Heart left ventricle (tissue), 16 donors: ENCODE measurements at regions of chr14 and their contacts with region 1.

Region 1: GRCh38 chr14:77028384-77029231 is at the start of gene IRF2BPL:
- DNase-seq: peak; percentile 99 to 100 (median 99)
- ATAC-seq: peak; percentile 65 to 83 (median 79)
- H3K4me3 ChIP-seq: peak within 1 kb of the TSS; percentile 64 to 96 (median 85)
- H3K27ac ChIP-seq: peak within 1 kb of the TSS; percentile 98 to 100 (median 100)
- H3K4me1 ChIP-seq: peaks cover 18 to 73% (median 56%) of the 10 kb centered on the region in 12 donors
- H3K27me3 ChIP-seq: no peaks in the 10 kb centered on the region
- CTCF ChIP-seq: no peak
- POLR2A ChIP-seq: peak; percentile 28 to 95
- total RNA-seq, gene IRF2BPL: 31.7 to 59.2 (median 36.7) TPM

Region 2: DNA sequence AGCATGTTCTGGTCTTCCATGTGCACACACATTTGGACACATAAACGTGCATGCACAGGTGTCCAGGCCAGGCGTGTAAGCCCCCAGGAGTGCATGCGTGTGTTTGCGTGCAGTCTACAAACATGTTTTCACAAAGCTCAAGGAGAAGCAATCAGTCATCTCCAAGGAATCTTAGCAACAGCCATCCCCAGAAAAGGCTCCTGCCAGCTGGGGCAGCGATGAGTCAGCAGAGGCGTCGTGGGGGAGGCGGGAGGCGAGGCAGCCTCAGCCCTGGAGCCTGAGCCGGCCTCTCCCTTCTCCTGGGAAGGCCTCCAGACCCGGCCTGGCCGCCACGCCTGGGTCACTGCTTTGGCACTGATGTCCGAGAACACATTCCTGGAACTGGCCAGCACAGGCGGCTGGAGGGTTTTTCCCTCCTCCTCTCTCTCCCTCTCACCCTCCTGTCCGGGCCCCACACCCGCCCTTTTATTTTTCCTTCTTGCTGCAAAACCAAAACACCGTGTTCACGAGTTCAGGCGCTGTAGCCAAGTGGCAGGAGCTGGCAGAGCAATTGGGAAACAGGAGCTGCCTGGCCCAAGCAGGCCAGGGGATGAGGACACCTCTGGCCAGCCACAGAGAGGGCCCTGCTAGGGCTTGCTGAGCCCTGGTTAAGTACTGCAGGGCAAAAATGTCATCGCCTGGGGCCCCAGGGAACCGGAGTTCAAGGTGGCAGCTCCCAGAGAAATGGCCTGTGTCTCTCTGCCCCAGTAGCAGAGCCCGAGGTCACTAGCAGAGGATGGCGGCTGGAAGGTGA is 109.7 kb before region 1 on chr14:
- intact Hi-C with region 1: loop called in 9 of 10 experiments (anchors 1 to 10 kb)
- DNase-seq: peak; percentile 91 to 98 (median 96)
- ATAC-seq: peak; percentile 86 to 91 (median 90)
- H3K4me3 ChIP-seq: peak overlapping the region in 4 of 12 donors; percentile 1 to 19 (median 4)
- H3K27ac ChIP-seq: peak overlapping the region; percentile 88 to 99 (median 94)
- H3K4me1 ChIP-seq: peaks cover 21 to 70% (median 50%) of the 10 kb centered on the region in 12 donors
- H3K27me3 ChIP-seq: no peaks in the 10 kb centered on the region
- CTCF ChIP-seq: peak in 2 of 12 donors; percentile 9 to 17
- POLR2A ChIP-seq: peak in 1 of 2 donors; percentile 37

Region 3: DNA sequence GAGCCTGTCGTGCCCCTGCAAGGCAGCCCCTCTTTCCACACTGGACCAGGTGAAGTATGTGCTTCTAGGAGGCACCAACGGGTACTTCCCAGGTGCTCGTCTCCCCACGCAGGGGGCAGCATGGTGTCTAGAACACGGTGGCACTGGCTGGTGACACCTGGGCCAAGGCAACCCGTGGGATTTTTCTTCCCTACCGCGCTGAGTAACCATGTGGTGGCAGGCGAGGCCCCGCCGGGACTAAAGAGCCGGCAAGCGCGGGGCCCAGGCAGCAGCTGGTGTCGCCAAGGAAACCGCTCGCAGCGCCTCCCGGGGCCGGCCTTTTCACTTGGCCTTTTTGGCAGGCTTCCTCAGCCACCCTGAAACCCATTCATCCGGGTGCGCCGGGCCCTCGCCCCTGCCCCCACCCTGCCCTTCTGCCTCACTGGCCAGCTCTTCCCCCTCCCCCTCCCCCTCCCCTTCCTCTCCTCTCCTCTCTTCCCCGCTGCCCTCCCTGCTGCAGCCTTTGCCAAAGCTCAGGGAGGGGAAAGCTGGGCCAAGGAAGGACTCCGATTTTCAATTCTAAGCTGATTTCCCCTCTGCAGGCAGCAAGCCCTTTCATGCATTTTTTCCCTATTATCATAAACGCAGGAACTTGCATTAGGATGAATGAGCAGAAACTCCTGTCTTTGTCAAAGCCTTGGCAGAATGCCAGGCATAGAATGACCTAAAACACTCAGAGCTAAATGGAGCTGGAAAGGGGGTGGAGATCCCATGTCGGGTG is 81.3 kb before region 1 on chr14:
- intact Hi-C with region 1: loop called in 3 of 10 experiments (anchors 2 kb)
- DNase-seq: peak; percentile 91 to 94 (median 93)
- ATAC-seq: peak; percentile 85 to 94 (median 94)
- H3K4me3 ChIP-seq: peak overlapping the region in 9 of 12 donors; percentile 0 to 29 (median 14)
- H3K27ac ChIP-seq: peak overlapping the region in 11 of 12 donors; percentile 77 to 89 (median 80)
- H3K4me1 ChIP-seq: peaks cover 5 to 50% (median 38%) of the 10 kb centered on the region in 12 donors
- H3K27me3 ChIP-seq: no peaks in the 10 kb centered on the region
- CTCF ChIP-seq: peak; percentile 32 to 78 (median 58)
- POLR2A ChIP-seq: no peak

Region 4: GRCh38 chr14:76956316-76957090 is 72.1 kb before region 1 on chr14:
- intact Hi-C with region 1: loop called in 7 of 10 experiments (anchors 1 to 5 kb)
- DNase-seq: peak; percentile 92 to 95 (median 94)
- ATAC-seq: peak; percentile 61 to 86 (median 78)
- H3K4me3 ChIP-seq: peak overlapping the region in 11 of 12 donors; percentile 6 to 57 (median 49)
- H3K27ac ChIP-seq: peak overlapping the region; percentile 88 to 99 (median 95)
- H3K4me1 ChIP-seq: peaks cover 12 to 82% (median 53%) of the 10 kb centered on the region in 12 donors
- H3K27me3 ChIP-seq: no peaks in the 10 kb centered on the region
- CTCF ChIP-seq: peak in 4 of 12 donors; percentile 5 to 31 (median 10)
- POLR2A ChIP-seq: peak in 1 of 2 donors; percentile 35

Region 5: DNA sequence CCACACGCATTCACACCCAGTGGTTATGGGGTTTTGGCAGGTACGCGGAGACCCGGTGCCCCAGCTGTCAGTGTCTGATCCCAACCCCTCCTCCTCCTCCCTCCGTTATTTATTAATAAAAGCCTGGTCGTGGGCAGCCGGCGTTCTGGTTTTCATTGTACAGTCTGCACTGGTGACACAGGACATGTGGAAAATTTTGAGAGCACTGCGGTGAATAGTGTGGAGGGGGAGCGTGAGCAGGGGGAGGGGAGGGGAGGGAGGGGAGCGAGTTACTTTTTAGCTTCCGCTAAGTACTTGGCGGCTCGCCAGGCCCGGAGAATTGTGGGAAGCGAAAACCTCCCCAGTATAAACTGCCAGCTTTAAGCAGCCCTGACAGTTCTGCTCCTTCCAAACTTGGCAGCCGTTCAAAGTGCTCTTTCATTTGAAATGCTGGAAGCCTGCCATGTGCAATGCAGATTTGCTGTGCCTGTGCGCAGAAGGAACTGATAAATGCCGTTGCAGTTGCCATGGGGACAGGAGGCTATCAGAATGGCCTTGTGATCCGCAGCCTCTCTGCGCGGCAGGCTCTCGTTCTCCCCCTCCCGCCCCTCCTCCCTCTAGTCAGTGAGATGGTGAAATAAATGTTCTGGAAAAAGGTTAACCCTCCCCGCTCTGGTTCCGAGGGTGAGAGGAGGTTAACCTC is 11.6 kb after region 1 on chr14:
- intact Hi-C with region 1: loop called in 6 of 10 experiments (anchors 1 to 2 kb)
- DNase-seq: peak; percentile 100
- ATAC-seq: peak; percentile 81 to 91 (median 90)
- H3K4me3 ChIP-seq: peak overlapping the region in 10 of 12 donors; percentile 28 to 55 (median 42)
- H3K27ac ChIP-seq: peak overlapping the region; percentile 92 to 99 (median 97)
- H3K4me1 ChIP-seq: peaks cover 37 to 97% (median 83%) of the 10 kb centered on the region in 12 donors
- H3K27me3 ChIP-seq: no peaks in the 10 kb centered on the region
- CTCF ChIP-seq: no peak
- POLR2A ChIP-seq: peak in 1 of 2 donors; percentile 22

Region 6: DNA sequence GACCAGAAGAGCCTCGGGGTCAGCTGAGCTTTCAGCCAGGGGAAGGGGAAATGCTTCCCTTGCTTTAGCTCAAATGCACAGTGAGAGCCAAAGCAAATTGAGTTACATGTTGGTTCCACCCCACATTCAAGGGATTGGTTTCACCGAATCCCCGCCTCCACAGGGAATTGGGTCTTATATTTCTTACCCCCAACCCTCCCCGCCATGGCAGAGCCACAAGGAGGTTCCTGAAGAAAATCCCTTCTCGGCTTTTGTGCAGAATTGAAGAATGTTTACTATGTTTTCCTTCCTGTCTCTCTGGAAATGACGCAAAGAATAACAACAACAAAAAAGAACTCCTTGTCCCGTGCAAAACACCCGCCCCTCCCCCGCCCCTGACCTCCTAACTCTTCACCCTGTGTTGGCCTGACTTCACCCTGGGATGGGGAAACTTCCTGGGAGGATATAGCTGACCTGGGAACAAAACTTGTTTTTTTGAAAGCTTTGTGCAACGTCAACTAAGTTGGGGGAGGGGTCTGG is 47.6 kb after region 1 on chr14:
- intact Hi-C with region 1: loop called in 1 of 10 experiments (anchors 2 kb)
- DNase-seq: peak; percentile 79 to 86 (median 85)
- ATAC-seq: peak; percentile 90 to 95 (median 93)
- H3K4me3 ChIP-seq: peak overlapping the region in 10 of 12 donors; percentile 7 to 49 (median 36)
- H3K27ac ChIP-seq: peak overlapping the region; percentile 87 to 96 (median 91)
- H3K4me1 ChIP-seq: peaks cover 0 to 31% (median 24%) of the 10 kb centered on the region in 12 donors
- H3K27me3 ChIP-seq: no peaks in the 10 kb centered on the region
- CTCF ChIP-seq: no peak
- POLR2A ChIP-seq: peak in 1 of 2 donors; percentile 50

Region 7: GRCh38 chr14:77097700-77098528 is 69.3 kb after region 1 on chr14 and contains the start of gene CIPC:
- intact Hi-C with region 1: loop called in 1 of 10 experiments (anchors 10 kb)
- DNase-seq: peak; percentile 100
- ATAC-seq: peak; percentile 89 to 96 (median 92)
- H3K4me3 ChIP-seq: peak within 1 kb of the TSS; percentile 64 to 92 (median 74)
- H3K27ac ChIP-seq: peak within 1 kb of the TSS; percentile 96 to 99 (median 98)
- H3K4me1 ChIP-seq: peaks cover 3 to 64% (median 45%) of the 10 kb centered on the region in 12 donors
- H3K27me3 ChIP-seq: no peaks in the 10 kb centered on the region
- CTCF ChIP-seq: no peak
- POLR2A ChIP-seq: peak; percentile 28 to 67
- total RNA-seq, gene CIPC: 44.5 to 85.9 (median 66.7) TPM